Activated CD8-positive, alpha-beta T cell treated with anti-CD3 and anti-CD28 coated beads for 36 hours (primary cell): ENCODE measurements at regions of chr6 and their contacts with region 1.

Region 1: GRCh38 chr6:3848925-3849605 is at the start of gene FAM50B:
- DNase-seq: peak; percentile 93
- ATAC-seq: peak; percentile 95
- H3K4me3 Mint-ChIP-seq: peak within 1 kb of the TSS; percentile 70
- H3K27ac Mint-ChIP-seq: peak within 1 kb of the TSS; percentile 76
- H3K4me1 Mint-ChIP-seq: peaks cover 20% of the 10 kb centered on the region
- H3K27me3 Mint-ChIP-seq: no peaks in the 10 kb centered on the region
- CTCF ChIP-seq: peak; percentile 83
- total RNA-seq, gene FAM50B: 5.2 to 6.0 TPM

Region 2: DNA sequence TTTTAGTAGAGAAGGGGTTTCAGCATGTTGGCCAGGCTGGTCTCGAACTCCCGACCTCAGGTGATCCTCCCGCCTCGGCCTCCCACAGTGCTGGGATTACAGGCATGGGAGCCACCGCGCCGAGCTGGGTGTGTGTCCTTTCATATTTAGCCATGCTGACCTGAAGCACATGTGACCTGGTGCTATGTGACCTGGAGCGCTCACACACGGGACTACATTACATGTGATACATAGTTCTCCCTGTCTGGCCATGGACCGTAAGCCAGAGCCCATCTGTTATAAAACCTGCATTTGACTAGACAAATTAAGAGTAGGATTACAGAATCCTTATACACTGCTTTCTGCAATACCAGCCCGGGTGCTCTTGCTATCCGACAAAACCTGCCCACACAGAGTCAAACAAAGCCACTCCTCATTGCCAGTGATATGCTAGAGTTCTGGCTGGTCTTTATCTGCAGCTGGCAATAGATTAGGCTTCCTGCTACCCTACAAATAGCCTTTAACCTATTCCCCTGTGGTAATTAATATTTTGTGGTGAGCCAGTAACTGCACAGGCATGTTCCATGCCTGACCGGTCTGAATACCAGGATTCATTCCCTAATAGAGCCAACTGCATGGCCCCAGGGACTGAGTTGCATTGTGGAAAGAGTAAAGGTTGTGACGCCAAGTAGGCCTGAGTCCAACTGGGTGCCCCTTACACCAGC is 26.2 kb before region 1 on chr6:
- CTCF ChIA-PET with region 1: no interaction called
- POLR2A ChIA-PET with region 1: no interaction called
- intact Hi-C with region 1: no loop called
- DNase-seq: no peak
- ATAC-seq: no peak
- H3K4me3 Mint-ChIP-seq: no peak overlapping the region
- H3K27ac Mint-ChIP-seq: no peak overlapping the region
- H3K4me1 Mint-ChIP-seq: no peaks in the 10 kb centered on the region
- H3K27me3 Mint-ChIP-seq: no peaks in the 10 kb centered on the region
- CTCF ChIP-seq: no peak

Region 3: GRCh38 chr6:3835055-3835731 is 13.9 kb before region 1 on chr6:
- CTCF ChIA-PET with region 1: interaction called, 14 read pairs
- POLR2A ChIA-PET with region 1: no interaction called
- intact Hi-C with region 1: no loop called
- DNase-seq: no peak
- ATAC-seq: no peak
- H3K4me3 Mint-ChIP-seq: no peak overlapping the region
- H3K27ac Mint-ChIP-seq: no peak overlapping the region
- H3K4me1 Mint-ChIP-seq: no peaks in the 10 kb centered on the region
- H3K27me3 Mint-ChIP-seq: peaks cover 5% of the 10 kb centered on the region
- CTCF ChIP-seq: no peak

Region 4: DNA sequence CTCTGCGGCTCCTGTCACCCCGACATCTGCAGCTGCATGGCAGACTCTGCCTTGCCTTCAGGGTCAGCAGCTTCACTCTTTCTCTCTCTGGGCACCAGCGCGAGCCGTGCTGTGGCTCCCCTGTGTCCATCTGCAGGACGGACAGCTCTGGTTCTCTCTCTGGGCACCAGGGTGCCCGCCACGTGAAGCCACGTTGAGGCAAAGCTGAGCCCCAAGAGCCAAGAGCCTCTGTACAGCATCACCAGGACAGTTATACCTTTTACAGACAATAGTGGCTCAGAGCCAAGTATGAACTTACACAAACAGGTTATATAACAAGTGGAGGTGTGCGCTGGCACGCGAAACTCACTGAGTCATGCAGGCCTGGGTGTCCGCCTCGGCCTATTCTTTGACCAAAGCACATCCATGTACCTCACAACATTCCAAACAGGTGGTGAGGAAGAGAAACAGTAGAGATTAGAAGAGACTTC is 50.9 kb after region 1 on chr6:
- CTCF ChIA-PET with region 1: no interaction called
- POLR2A ChIA-PET with region 1: no interaction called
- intact Hi-C with region 1: no loop called
- DNase-seq: no peak
- ATAC-seq: no peak
- H3K4me3 Mint-ChIP-seq: no peak overlapping the region
- H3K27ac Mint-ChIP-seq: no peak overlapping the region
- H3K4me1 Mint-ChIP-seq: no peaks in the 10 kb centered on the region
- H3K27me3 Mint-ChIP-seq: peaks cover 2% of the 10 kb centered on the region
- CTCF ChIP-seq: no peak

Region 5: DNA sequence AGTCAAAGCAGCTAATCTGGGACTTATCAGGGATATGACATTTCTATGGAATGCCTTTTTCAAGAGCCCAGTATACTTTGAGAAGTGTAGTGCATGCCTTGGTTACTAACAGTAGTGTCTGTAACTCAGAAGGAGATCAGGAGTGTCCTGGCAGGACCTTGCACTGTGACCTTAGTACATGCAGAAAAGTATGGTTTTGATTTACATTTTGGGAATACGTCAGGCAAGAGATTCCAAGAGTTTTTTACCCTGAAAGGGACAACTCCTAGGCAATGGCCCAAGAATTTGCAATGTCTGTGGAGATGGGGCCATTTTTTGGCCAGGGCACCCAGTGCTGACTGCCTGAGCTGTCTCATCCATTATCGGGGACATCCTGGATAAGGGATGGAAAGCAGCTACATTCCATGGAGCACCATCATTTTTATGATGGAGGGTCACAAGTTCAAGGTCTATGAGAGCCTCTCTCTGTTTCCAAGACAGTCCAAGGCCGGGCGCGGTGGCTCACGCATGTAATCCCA is 80.3 kb after region 1 on chr6:
- CTCF ChIA-PET with region 1: interaction called, 28 read pairs
- POLR2A ChIA-PET with region 1: no interaction called
- intact Hi-C with region 1: no loop called
- DNase-seq: no peak
- ATAC-seq: no peak
- H3K4me3 Mint-ChIP-seq: no peak overlapping the region
- H3K27ac Mint-ChIP-seq: no peak overlapping the region
- H3K4me1 Mint-ChIP-seq: no peaks in the 10 kb centered on the region
- H3K27me3 Mint-ChIP-seq: peaks cover 4% of the 10 kb centered on the region
- CTCF ChIP-seq: no peak

Region 6: DNA sequence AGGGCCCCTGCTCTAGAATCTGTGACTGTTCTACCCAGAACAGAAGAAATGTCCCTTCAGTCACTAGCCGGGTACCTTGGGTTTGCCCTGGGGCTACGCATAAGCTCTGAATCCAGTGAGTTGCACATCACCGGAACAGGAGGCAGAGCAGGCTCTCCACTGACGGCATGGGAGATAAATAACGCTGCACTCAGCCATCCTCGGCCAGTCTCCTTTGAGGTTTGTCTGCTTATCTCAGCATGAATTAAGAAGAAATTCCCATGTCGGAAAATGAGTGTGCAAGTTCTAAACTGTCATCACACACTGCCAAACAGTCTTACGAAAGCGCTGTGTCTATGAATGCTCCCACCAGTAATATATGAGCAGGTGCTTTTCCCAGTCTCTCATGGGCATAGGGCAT is 90.9 kb after region 1 on chr6:
- CTCF ChIA-PET with region 1: interaction called, 11 read pairs
- POLR2A ChIA-PET with region 1: no interaction called
- intact Hi-C with region 1: no loop called
- DNase-seq: no peak
- ATAC-seq: no peak
- H3K4me3 Mint-ChIP-seq: no peak overlapping the region
- H3K27ac Mint-ChIP-seq: no peak overlapping the region
- H3K4me1 Mint-ChIP-seq: peaks cover 3% of the 10 kb centered on the region
- H3K27me3 Mint-ChIP-seq: peaks cover 20% of the 10 kb centered on the region
- CTCF ChIP-seq: no peak